Activated naive CD4-positive, alpha-beta T cell treated with anti-CD3 and anti-CD28 coated beads for 36 hours (primary cell): ENCODE measurements at regions of chr9 and their contacts with region 1.

Region 1: GRCh38 chr9:94603259-94604160 is 9.9 kb upstream of the FBP2 start:
- DNase-seq: peak; percentile 86
- H3K4me3 Mint-ChIP-seq: no peak overlapping the region
- H3K27ac Mint-ChIP-seq: no peak overlapping the region
- H3K4me1 Mint-ChIP-seq: peaks cover 6% of the 10 kb centered on the region
- H3K27me3 Mint-ChIP-seq: no peaks in the 10 kb centered on the region

Region 2: DNA sequence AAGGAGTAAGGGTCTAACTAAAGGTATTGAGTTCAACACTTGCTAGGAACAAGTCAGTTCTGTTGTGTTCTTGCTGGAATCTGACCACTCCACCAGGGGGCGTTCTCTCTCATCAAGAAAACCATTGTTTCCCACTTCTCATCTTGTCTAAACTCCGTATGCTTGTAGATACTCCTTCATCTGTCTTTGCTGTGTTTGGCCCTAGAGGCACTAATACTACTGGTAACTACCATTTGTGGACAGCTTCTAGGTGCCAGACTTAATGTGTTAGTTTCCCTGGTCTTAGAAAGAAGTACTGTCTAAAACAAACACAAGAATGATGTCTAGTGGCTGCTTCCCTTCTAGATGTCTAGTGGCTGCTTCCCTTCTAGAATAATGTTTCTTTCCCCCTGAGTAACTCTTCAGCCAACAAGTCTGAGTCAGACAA is 538.0 kb before region 1 on chr9:
- CTCF ChIA-PET with region 1: no interaction called
- intact Hi-C with region 1: loop called (anchors 5 kb)
- DNase-seq: peak; percentile 86
- H3K4me3 Mint-ChIP-seq: no peak overlapping the region
- H3K27ac Mint-ChIP-seq: no peak overlapping the region
- H3K4me1 Mint-ChIP-seq: no peaks in the 10 kb centered on the region
- H3K27me3 Mint-ChIP-seq: no peaks in the 10 kb centered on the region

Region 3: DNA sequence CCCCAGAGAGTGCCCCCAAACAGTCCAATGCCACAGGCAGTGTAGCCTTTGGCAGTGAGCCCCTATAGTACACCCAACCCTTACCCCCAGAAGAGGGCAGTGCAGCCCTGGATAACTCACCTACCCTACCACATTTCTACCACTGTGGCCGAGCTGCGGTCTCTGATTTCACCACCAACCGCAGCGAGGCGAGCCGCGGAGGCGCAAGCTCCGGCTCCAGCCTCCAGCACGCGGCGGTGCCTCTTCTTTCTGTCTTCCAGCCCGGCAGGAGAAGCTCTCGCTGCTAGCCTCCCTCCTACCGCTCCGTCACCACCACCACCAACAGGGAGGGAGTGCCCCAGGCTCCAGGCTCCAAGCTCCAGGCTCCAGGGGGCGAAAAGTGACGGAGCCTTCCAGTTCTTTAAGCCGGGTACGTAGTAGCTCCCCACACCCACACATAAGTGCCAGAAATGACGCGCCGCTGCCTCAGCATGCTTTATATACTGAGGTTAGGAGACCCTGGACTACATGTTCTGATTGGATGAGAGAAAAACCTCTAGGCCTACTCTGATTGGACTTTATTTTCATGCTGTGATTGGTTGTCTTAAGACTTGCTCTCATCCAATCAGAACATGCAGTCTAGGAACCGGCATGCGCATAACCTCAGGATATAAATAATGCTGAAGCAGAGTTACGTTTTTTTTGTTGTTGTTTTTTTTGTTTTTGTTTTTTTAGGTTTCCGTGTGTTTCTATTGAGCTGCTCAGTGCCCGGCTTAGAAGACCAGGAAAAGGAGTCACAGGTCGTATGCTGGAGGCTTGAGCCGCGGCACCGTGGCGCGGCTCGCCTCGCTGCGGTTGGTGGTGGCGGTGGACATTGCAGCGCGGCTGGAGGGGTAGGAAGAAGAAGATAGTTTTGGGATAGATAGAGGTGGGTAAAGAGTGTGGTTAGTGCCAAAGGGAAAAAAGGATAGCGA is 48.8 kb before region 1 on chr9 and contains the start of gene PCAT7:
- CTCF ChIA-PET with region 1: interaction called, 6 read pairs
- intact Hi-C with region 1: loop called (anchors 1 kb)
- DNase-seq: peak; percentile 50
- H3K4me3 Mint-ChIP-seq: no peak within 1 kb of the TSS
- H3K27ac Mint-ChIP-seq: no peak within 1 kb of the TSS
- H3K4me1 Mint-ChIP-seq: no peaks in the 10 kb centered on the region
- H3K27me3 Mint-ChIP-seq: peaks cover 1% of the 10 kb centered on the region
- total RNA-seq, gene PCAT7: not detected

Region 4: GRCh38 chr9:94576131-94576530 is 27.4 kb before region 1 on chr9:
- CTCF ChIA-PET with region 1: no interaction called
- intact Hi-C with region 1: no loop called
- DNase-seq: no peak
- H3K4me3 Mint-ChIP-seq: no peak overlapping the region
- H3K27ac Mint-ChIP-seq: no peak overlapping the region
- H3K4me1 Mint-ChIP-seq: no peaks in the 10 kb centered on the region
- H3K27me3 Mint-ChIP-seq: peaks cover 8% of the 10 kb centered on the region